ENCODE measurements at regions of chr7 and their contacts with region 1.

Region 1: DNA sequence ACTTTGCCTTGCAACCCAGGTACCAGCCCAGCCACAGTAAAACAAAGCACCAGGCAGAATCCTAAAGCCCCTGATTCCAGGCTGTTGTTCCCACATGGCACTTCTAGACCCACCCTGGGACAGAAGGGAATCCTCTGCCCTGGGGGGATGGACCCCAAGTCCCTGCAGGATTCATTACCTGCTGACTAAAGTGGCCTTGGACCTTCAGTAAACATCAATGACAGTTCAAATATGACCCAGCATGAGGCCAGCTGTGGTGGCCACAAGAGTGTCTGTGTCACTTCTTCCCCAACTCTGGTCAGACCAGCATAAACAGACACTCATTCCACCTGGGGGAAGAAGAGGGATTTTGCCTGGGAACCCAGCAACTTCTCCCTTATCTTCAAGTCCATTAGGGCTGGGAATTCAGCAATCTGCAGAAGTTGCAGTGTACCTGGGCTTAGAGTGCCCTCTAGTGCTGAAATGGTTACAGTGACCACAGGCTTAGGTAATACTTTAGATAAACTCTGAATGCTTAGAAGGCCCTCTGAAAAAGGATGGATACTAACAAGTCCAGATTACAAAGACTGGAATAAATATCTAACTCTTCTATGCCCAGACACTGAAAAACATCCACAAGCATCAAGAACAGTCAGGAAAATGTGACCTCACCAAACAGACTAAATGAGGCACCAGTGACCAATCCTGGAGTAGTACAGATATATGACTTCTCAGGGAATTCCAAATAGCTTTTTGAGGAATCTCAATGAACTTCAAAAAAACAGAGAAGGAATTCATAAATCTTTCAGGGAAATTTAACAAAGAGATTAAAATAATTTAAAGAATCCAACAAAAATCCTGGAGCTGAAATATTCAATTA is 108.5 kb upstream of the TMEM168 start:
- DNase-seq: peak; percentile 78
- H3K4me3 ChIP-seq: no peak overlapping the region
- H3K27ac ChIP-seq: no peak overlapping the region
- H3K4me1 ChIP-seq: no peaks in the 10 kb centered on the region
- H3K27me3 ChIP-seq: no peaks in the 10 kb centered on the region
- CTCF ChIP-seq: peak; percentile 65 to 74
- POLR2A ChIP-seq: no peak

Region 2: GRCh38 chr7:112481833-112482670 is 416.6 kb before region 1 on chr7:
- CTCF ChIA-PET with region 1: interaction called, 7 read pairs
- POLR2A ChIA-PET with region 1: no interaction called
- dilution Hi-C with region 1: no loop called
- intact Hi-C with region 1: loop called (anchors 5 kb)
- DNase-seq: peak; percentile 41
- H3K4me3 ChIP-seq: no peak overlapping the region
- H3K27ac ChIP-seq: peak overlapping the region; percentile 28
- H3K4me1 ChIP-seq: peaks cover 33% of the 10 kb centered on the region
- H3K27me3 ChIP-seq: no peaks in the 10 kb centered on the region
- CTCF ChIP-seq: no peak
- POLR2A ChIP-seq: no peak

Region 3: DNA sequence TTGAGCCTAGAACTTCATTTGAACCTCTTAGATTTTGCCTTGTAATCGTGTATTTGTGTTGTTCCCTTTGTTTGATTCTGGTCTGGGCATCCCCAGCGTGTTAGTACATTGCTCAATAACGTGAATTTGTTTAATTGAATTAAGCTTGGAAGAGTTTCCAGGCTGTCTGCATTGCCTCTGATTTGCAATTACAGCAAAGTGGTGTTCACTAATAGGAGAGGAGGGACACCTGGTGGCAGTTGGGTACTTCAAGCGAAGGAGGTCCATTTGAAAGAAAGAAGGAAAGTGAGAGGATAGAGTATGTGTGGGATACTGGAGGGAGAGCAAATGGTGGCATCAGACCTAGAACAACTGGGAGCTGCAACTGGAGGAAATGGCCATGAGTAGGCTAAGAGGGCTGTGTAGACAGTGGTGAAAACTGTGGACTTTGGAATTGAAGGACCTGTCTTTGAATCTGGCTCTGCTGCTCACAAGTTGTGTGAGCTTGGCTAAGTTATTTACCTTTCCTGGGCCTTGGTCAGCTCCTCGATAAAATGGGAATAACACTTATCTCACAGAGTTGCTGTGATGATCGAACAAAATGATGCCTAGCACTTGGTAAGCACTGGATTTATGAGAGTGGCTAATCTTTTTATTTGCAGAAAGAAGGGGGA is 402.7 kb before region 1 on chr7:
- CTCF ChIA-PET with region 1: interaction called, 3 read pairs
- POLR2A ChIA-PET with region 1: no interaction called
- dilution Hi-C with region 1: no loop called
- intact Hi-C with region 1: loop called (anchors 5 kb)
- DNase-seq: peak; percentile 75
- H3K4me3 ChIP-seq: no peak overlapping the region
- H3K27ac ChIP-seq: no peak overlapping the region
- H3K4me1 ChIP-seq: no peaks in the 10 kb centered on the region
- H3K27me3 ChIP-seq: peaks cover 0 to 4% of the 10 kb centered on the region in 2 experiments
- CTCF ChIP-seq: peak; percentile 45 to 58
- POLR2A ChIP-seq: no peak

Region 4: GRCh38 chr7:112869111-112869757 is 29.4 kb before region 1 on chr7:
- CTCF ChIA-PET with region 1: interaction called, 9 read pairs
- POLR2A ChIA-PET with region 1: no interaction called
- dilution Hi-C with region 1: no loop called
- intact Hi-C with region 1: loop called (anchors 2 kb)
- DNase-seq: peak; percentile 51
- H3K4me3 ChIP-seq: no peak overlapping the region
- H3K27ac ChIP-seq: no peak overlapping the region
- H3K4me1 ChIP-seq: no peaks in the 10 kb centered on the region
- H3K27me3 ChIP-seq: no peaks in the 10 kb centered on the region
- CTCF ChIP-seq: peak; percentile 90 to 93
- POLR2A ChIP-seq: no peak

Region 5: GRCh38 chr7:113421696-113422330 is 523.2 kb after region 1 on chr7:
- CTCF ChIA-PET with region 1: interaction called, 8 read pairs
- POLR2A ChIA-PET with region 1: no interaction called
- dilution Hi-C with region 1: no loop called
- intact Hi-C with region 1: loop called (anchors 1 kb)
- DNase-seq: peak; percentile 74
- H3K4me3 ChIP-seq: no peak overlapping the region
- H3K27ac ChIP-seq: no peak overlapping the region
- H3K4me1 ChIP-seq: no peaks in the 10 kb centered on the region
- H3K27me3 ChIP-seq: no peaks in the 10 kb centered on the region
- CTCF ChIP-seq: peak; percentile 72 to 84
- POLR2A ChIP-seq: no peak

Measured in endothelial cell of umbilical vein (primary cell).